WTC11 (cell line): ENCODE measurements at regions of chr17 and their contacts with region 1.

Region 1: GRCh38 chr17:50956750-50957523 is 90.8 kb upstream of the TOB1 start:
- DNase-seq: peak; percentile 79
- ATAC-seq: peak; percentile 89
- H3K4me3 Mint-ChIP-seq: no peak overlapping the region
- H3K27ac Mint-ChIP-seq: 0 out of 2 replicates have a peak overlapping the region, but pooled peaks have one; percentile 19
- H3K4me1 Mint-ChIP-seq: peaks cover 36% of the 10 kb centered on the region
- H3K27me3 Mint-ChIP-seq: no peaks in the 10 kb centered on the region
- CTCF ChIP-seq: peak; percentile 44; the same call in 1 of the 2 replicates

Region 2: DNA sequence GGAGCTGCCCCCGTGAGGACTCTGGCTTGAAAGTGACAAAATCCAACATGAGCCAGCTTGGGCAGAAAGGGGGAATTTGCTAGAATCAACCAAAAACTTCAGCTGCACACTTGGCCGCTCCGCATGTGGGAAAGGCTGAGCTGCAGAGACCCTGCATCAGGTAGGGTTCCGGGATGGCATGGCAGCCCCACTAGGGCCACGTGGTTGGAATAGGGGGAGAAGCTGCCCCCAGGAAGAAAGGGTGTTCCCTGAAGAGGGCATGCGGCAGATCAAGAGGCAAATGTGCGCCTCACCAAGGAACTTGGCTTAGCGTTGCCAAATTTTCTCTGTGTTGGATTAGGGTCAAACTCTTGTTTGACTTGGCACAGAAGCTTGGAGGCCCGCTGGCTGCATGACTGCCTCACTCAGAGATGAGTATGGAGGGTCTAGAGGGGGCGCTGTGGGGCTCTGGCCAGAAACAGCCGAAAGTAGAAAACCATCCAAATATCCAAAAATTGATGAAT is 150.7 kb before region 1 on chr17:
- CTCF ChIA-PET with region 1: interaction called, 13 read pairs
- POLR2A ChIA-PET with region 1: no interaction called
- DNase-seq: peak; percentile 56
- ATAC-seq: peak; percentile 81
- H3K4me3 Mint-ChIP-seq: no peak overlapping the region
- H3K27ac Mint-ChIP-seq: no peak overlapping the region
- H3K4me1 Mint-ChIP-seq: no peaks in the 10 kb centered on the region
- H3K27me3 Mint-ChIP-seq: no peaks in the 10 kb centered on the region
- CTCF ChIP-seq: peak; percentile 43; the same call in 1 of the 2 replicates

Region 3: GRCh38 chr17:50853015-50853615 is 103.8 kb before region 1 on chr17:
- CTCF ChIA-PET with region 1: interaction called, 80 read pairs
- POLR2A ChIA-PET with region 1: no interaction called
- DNase-seq: no peak
- ATAC-seq: no peak
- H3K4me3 Mint-ChIP-seq: no peak overlapping the region
- H3K27ac Mint-ChIP-seq: peak overlapping the region; percentile 3; the same call in 1 of the 2 replicates
- H3K4me1 Mint-ChIP-seq: peaks cover 11% of the 10 kb centered on the region
- H3K27me3 Mint-ChIP-seq: no peaks in the 10 kb centered on the region; the same call in 1 of the 2 replicates
- CTCF ChIP-seq: no peak

Region 4: DNA sequence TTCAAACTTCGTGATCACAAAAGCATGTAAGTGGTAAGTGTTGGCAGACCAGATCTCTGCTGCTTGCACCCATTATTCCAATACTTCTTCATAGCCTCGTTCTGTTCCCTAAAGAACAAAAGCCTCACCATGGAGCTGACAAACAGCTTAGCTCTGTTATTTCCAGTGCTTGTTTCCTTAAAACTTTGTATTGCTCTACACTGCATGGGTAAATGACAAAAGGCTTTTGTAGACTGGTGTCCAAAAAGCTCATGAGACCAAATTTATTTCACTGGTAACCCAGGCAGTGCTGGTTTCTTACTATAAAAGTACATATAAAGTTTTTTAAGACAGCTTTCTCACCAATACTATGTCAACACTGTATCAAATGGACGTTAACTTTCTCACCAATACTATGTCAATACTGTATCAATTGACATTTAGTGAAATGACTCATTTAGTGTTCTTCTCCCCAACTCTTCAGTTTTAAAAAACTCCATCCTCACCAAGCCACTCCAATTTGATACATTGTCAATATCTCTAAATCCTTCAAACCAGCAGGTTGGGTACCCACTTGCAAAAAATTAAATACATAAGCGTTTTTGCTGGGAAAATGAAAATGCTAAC is 95.8 kb before region 1 on chr17:
- CTCF ChIA-PET with region 1: interaction called, 63 read pairs
- POLR2A ChIA-PET with region 1: interaction called, 22 read pairs
- DNase-seq: no peak
- ATAC-seq: no peak
- H3K4me3 Mint-ChIP-seq: no peak overlapping the region
- H3K27ac Mint-ChIP-seq: no peak overlapping the region
- H3K4me1 Mint-ChIP-seq: peaks cover 20% of the 10 kb centered on the region
- H3K27me3 Mint-ChIP-seq: no peaks in the 10 kb centered on the region
- CTCF ChIP-seq: no peak

Region 5: DNA sequence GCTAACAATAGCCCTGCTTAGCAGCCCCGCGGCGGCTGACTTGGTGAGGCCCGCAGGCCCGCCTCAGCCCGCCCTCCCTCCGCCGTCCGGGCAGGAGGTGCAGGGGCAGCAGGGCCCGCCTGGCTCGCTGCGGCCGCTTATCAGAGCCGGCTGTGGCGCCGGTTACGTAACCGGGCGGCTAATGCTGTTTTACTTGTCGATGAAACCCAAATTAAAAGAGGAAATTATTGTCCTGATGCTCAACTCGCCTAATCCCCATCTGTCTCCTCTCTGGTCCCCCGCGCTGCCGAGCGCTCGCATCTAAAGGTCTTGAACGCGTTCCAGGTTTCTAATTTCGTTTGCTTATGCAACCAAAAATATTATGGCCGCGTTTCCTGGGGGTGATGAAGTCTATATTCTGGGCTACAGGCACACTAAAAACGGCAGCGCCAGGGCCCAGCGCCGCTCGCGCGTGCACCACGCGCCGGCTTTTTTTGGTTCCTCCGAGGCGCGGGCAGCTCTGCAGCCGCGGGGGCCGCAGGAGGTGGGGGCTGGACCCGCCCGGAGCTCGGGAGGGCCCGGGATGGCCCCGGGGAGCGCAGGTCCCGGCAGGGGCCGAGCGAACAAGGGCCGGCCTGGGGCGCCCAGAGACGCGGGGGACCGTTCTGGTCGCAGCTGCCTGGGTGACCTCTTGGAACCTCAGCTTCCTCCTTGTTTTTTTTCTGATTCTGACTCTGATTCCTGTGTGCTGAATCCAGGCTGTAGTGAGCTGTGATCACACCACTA is 25.6 kb before region 1 on chr17:
- CTCF ChIA-PET with region 1: interaction called, 11 read pairs
- POLR2A ChIA-PET with region 1: no interaction called
- DNase-seq: peak; percentile 74
- ATAC-seq: peak; percentile 91
- H3K4me3 Mint-ChIP-seq: peak overlapping the region; percentile 75
- H3K27ac Mint-ChIP-seq: no peak overlapping the region
- H3K4me1 Mint-ChIP-seq: peaks cover 18% of the 10 kb centered on the region
- H3K27me3 Mint-ChIP-seq: peaks cover 28% of the 10 kb centered on the region
- CTCF ChIP-seq: no peak

Region 6: DNA sequence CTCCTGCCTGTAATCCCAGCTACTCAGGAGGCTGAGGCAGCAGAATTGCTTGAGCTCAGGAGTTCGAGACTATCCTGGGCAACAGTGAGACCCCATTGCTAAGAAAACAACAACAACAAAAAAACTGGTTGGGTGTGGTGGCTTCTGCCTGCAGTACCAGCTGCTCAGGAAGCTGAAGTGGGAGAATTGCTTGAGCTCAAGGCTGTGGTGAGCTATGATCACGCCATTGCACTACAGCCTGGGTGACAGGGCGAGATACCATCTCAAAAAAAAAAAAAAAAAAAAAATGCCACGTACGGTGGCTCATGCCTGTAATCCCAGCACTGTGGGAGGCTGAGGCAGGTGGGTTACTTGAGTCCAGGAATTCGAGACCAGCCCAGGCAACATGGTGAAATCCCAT is 243.4 kb after region 1 on chr17:
- CTCF ChIA-PET with region 1: no interaction called
- POLR2A ChIA-PET with region 1: no interaction called
- DNase-seq: no peak
- ATAC-seq: no peak
- H3K4me3 Mint-ChIP-seq: no peak overlapping the region
- H3K27ac Mint-ChIP-seq: no peak overlapping the region
- H3K4me1 Mint-ChIP-seq: no peaks in the 10 kb centered on the region
- H3K27me3 Mint-ChIP-seq: no peaks in the 10 kb centered on the region
- CTCF ChIP-seq: no peak